ENCODE measurements at regions of chr11 and their contacts with region 1.

Region 1: DNA sequence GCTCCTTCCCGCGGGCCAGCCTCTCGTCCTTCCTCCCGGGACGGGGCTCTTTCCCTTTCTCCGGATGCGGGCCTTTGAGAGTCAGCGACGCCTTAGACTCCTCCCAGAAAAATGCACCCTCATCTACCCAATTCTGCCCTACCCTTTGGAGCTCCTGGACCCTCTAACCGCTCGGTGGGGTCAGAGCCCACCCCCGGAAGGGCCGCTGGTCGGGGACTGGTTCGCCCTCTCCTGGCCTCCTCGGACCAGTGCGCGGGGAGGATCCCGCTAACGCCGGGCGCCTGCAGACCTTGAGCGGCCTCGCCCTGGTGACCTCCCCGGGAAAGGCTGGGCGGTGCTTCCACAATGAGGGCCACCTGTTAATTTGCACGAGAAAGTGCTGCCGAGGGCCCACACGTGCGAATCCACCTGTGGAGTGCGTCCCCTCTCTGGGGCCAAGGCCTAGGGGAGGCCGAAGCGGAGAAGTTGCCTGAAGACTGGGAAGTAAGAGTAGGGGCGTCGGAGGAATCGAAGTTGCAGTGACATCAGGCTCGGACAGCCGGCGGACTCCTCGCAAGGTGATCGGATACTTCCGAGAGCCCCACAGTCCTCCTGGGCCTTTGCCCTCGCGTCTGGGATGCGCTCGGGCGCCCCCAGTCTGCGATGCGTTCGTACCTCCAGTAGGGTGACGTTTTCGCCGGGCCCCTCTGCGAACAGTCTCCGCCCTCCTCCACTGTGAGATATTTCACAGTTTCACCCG is 61.5 kb downstream of the ENDOD1 start:
- DNase-seq: peak; percentile 89
- H3K4me3 Mint-ChIP-seq: peak overlapping the region; percentile 87
- H3K27ac Mint-ChIP-seq: peak overlapping the region; percentile 92
- H3K4me1 Mint-ChIP-seq: peaks cover 51% of the 10 kb centered on the region
- H3K27me3 Mint-ChIP-seq: no peaks in the 10 kb centered on the region

Region 2: DNA sequence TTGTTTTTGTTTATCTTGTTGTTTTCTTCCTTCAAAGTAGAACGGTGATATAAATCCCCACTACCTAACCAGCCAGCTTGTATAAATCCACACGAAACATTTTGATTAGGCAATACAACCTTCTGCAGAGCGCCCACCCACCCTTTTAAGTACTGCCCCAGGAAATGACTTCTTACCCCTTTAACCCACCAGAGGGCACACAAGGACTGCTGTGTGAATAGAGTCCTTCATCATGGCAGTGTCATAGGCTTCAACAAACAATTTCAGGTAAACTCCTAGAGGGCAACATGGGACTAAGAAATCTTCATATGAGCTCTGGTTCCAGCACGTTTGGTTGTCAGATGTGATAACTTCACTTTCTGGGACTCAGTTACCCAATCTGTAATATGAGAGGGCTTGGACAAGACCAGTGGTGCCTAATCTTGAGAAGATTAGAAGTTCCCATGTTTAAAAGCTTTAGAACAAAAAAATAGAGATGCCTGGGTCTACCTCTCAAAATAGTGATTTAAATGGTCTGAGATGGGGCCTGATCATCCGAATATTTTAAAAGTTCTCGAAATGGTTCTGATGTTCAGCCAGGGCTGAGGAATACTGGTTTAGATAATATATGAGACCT is 527.9 kb before region 1 on chr11:
- intact Hi-C with region 1: loop called (anchors 10 kb)
- DNase-seq: peak; percentile 24
- H3K4me3 Mint-ChIP-seq: no peak overlapping the region
- H3K27ac Mint-ChIP-seq: no peak overlapping the region
- H3K4me1 Mint-ChIP-seq: no peaks in the 10 kb centered on the region
- H3K27me3 Mint-ChIP-seq: peaks cover 6% of the 10 kb centered on the region

Region 3: GRCh38 chr11:94997437-94997836 is 153.7 kb before region 1 on chr11:
- intact Hi-C with region 1: no loop called
- DNase-seq: no peak
- H3K4me3 Mint-ChIP-seq: no peak overlapping the region
- H3K27ac Mint-ChIP-seq: no peak overlapping the region
- H3K4me1 Mint-ChIP-seq: no peaks in the 10 kb centered on the region
- H3K27me3 Mint-ChIP-seq: peaks cover 2% of the 10 kb centered on the region

Region 4: DNA sequence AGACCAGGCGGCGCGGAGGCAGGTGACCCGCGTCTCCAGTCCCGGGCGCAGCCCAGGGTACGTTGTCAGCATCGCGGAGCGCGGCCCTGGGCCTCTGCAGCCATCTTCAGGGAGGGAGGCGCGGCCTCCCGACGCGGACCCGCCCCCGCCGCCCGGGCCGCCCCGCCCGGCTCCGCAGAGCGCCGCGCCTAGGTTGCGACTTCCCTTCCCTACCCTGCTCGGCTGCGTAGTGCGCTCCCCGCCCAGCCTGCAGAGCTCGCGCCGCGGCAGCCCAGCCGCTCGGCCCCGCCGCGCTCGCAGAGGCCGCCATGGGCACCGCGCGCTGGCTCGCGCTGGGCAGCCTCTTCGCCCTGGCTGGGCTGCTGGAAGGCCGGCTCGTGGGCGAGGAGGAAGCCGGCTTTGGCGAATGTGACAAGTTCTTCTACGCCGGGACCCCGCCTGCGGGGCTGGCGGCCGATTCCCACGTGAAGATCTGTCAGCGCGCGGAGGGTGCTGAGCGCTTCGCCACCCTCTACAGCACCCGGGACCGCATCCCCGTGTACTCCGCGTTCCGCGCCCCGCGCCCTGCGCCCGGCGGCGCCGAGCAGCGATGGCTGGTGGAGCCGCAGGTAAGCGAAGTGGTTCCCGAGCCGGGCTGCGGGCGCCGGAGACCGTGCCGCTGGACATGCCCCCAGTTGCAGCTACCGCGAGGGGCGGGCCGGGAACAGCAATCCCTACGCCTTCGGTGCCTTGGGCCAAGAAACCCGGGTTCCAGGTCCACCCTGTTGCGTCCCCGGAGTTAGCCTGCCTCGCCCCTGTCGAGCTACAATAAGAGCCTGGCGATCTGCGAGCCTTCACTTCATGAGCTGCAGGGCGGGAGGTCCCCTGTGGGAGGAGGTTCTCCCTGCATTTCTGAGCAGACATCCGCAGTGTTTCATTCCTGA is 61.2 kb before region 1 on chr11 and contains the start of gene ENDOD1:
- intact Hi-C with region 1: loop called (anchors 1 kb)
- DNase-seq: peak; percentile 85
- H3K4me3 Mint-ChIP-seq: peak within 1 kb of the TSS; percentile 88
- H3K27ac Mint-ChIP-seq: peak within 1 kb of the TSS; percentile 95
- H3K4me1 Mint-ChIP-seq: peaks cover 66% of the 10 kb centered on the region
- H3K27me3 Mint-ChIP-seq: no peaks in the 10 kb centered on the region
- total RNA-seq, gene ENDOD1: 33.7 and 34.9 TPM in 2 replicates

Region 5: GRCh38 chr11:95134491-95134890 is 16.6 kb before region 1 on chr11:
- intact Hi-C with region 1: no loop called
- DNase-seq: no peak
- H3K4me3 Mint-ChIP-seq: no peak overlapping the region
- H3K27ac Mint-ChIP-seq: no peak overlapping the region
- H3K4me1 Mint-ChIP-seq: peaks cover 15% of the 10 kb centered on the region
- H3K27me3 Mint-ChIP-seq: no peaks in the 10 kb centered on the region

Region 6: GRCh38 chr11:95674657-95675358 is 523.7 kb after region 1 on chr11:
- intact Hi-C with region 1: loop called (anchors 1 kb)
- DNase-seq: no peak
- H3K4me3 Mint-ChIP-seq: no peak overlapping the region
- H3K27ac Mint-ChIP-seq: peak overlapping the region; percentile 78
- H3K4me1 Mint-ChIP-seq: peaks cover 54% of the 10 kb centered on the region
- H3K27me3 Mint-ChIP-seq: no peaks in the 10 kb centered on the region

Region 7: GRCh38 chr11:95764267-95764898 is 613.3 kb after region 1 on chr11:
- intact Hi-C with region 1: loop called (anchors 1 kb)
- DNase-seq: no peak
- H3K4me3 Mint-ChIP-seq: no peak overlapping the region
- H3K27ac Mint-ChIP-seq: no peak overlapping the region
- H3K4me1 Mint-ChIP-seq: peaks cover 15% of the 10 kb centered on the region
- H3K27me3 Mint-ChIP-seq: no peaks in the 10 kb centered on the region